ENCODE measurements at regions of chr2 and their contacts with region 1.

Region 1: GRCh38 chr2:74267068-74267467 is 68.7 kb downstream of the MTHFD2 start:
- DNase-seq: peak; percentile 76
- ATAC-seq: peak; percentile 90
- H3K4me3 ChIP-seq: no peak overlapping the region
- H3K27ac ChIP-seq: no peak overlapping the region
- H3K4me1 ChIP-seq: peaks cover 11% of the 10 kb centered on the region
- H3K27me3 ChIP-seq: no peaks in the 10 kb centered on the region
- CTCF ChIP-seq: peak; percentile 71

Region 2: DNA sequence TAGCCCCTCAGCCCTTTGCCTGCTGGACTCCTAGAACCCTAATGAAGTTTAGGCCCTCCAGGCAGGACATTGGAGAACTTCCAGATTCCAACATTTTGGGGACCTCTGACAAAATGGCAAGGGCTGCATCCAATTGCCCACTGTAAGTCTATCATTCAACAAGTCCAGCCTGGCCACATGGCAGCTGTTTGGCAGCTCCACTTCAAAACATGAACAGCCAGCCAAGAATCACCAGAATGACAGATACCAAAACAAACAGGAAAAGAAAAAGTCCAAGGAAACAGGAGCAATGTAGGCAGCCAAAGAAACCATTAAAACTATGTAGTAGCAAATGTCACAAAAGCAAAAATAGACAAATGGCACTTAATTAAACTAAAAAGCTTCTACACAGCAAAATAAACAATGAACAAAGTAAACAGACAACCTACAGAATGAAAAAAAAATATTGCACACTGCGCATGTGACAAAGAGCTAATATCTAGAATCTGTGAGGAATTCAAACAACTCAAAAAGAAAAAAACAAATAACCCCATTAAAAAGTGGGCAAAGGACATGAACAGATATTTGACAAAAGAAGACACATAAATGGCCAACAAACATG is 50.7 kb after region 1 on chr2:
- CTCF ChIA-PET with region 1: no interaction called
- POLR2A ChIA-PET with region 1: no interaction called
- intact Hi-C with region 1: loop called (anchors 5 kb)
- DNase-seq: no peak
- ATAC-seq: no peak; the same call in 1 of the 2 replicates
- H3K4me3 ChIP-seq: no peak overlapping the region
- H3K27ac ChIP-seq: no peak overlapping the region
- H3K4me1 ChIP-seq: no peaks in the 10 kb centered on the region
- H3K27me3 ChIP-seq: no peaks in the 10 kb centered on the region
- CTCF ChIP-seq: no peak

Region 3: DNA sequence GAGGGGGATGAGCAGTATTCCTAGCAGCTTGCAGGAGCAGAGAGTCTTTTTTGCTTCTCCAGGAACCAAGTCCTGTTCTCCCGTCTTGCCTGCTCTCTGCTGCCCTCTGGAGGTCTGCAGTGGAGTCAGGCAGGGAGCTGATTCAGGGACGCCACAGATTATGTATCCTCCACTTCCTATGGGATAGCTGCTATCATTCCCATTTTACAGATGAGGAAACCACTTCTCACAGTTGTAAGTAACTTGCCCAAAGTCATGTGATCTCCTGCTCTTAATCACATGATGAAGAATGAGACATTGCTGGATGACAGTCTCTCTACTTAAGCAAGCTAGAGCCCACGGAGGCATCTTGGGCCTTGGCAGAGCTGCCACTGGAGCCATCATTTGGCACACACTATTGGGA is 67.9 kb after region 1 on chr2:
- CTCF ChIA-PET with region 1: interaction called, 10 read pairs
- POLR2A ChIA-PET with region 1: no interaction called
- intact Hi-C with region 1: loop called (anchors 1 kb)
- DNase-seq: peak; percentile 82
- ATAC-seq: peak; percentile 95
- H3K4me3 ChIP-seq: no peak overlapping the region
- H3K27ac ChIP-seq: no peak overlapping the region
- H3K4me1 ChIP-seq: no peaks in the 10 kb centered on the region
- H3K27me3 ChIP-seq: no peaks in the 10 kb centered on the region
- CTCF ChIP-seq: peak; percentile 88

Region 4: GRCh38 chr2:74383254-74383653 is 116.2 kb after region 1 on chr2:
- CTCF ChIA-PET with region 1: no interaction called
- POLR2A ChIA-PET with region 1: no interaction called
- intact Hi-C with region 1: loop called (anchors 1 kb)
- DNase-seq: peak; percentile 30
- ATAC-seq: peak; percentile 84
- H3K4me3 ChIP-seq: no peak overlapping the region
- H3K27ac ChIP-seq: no peak overlapping the region
- H3K4me1 ChIP-seq: 0 out of 2 replicates have a peak, but pooled peaks cover 5% of the 10 kb centered on the region
- H3K27me3 ChIP-seq: no peaks in the 10 kb centered on the region
- CTCF ChIP-seq: no peak

Measured in PC-3 (cell line).